ENCODE measurements at regions of chr2 and their contacts with region 1.

Region 1: DNA sequence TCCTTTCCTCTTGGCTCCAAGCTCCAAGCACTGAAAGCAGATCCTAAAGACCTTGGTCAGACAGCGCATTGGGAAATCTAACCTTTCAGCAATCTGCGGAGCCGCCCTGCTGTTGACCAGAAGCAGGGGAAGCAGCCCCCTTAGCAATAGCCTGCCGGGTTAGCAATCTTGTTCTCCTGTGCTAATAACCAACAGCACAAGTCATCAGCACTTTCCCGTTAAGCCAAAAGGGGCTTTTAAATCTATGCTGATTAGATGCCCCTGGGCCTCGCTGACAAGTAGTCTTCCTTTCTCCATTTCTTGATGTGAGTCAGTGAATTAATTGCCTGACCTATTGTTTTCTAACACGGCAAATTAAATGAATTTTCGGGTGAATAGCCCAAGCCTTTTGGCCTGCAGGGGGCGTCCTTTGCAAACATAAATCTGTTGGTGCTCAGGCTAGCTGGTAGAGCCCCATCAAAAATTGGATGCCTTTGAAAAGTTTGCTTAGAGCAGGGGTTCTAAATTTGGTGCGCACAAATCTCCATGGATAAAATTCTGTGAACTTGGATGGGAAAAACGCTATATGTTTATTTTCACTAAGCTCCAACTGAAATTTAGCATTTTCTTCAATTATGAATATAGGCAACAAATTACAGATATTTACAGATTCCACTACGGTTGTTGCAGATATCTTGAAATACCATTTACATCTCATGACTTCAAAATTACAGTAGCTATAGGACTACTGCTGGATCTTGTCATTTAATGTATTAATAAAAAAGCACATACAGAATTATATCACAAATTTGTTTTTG is 24.6 kb downstream of the MAIP1 start:
- DNase-seq: peak; percentile 62
- H3K4me3 Mint-ChIP-seq: no peak overlapping the region
- H3K27ac Mint-ChIP-seq: no peak overlapping the region
- H3K4me1 Mint-ChIP-seq: peaks cover 20% of the 10 kb centered on the region
- H3K27me3 Mint-ChIP-seq: no peaks in the 10 kb centered on the region

Region 2: GRCh38 chr2:199911052-199911876 is 68.8 kb before region 1 on chr2 and contains the start of gene C2orf69:
- intact Hi-C with region 1: loop called (anchors 5 kb)
- DNase-seq: peak; percentile 91
- H3K4me3 Mint-ChIP-seq: peak within 1 kb of the TSS; percentile 92
- H3K27ac Mint-ChIP-seq: peak within 1 kb of the TSS; percentile 96
- H3K4me1 Mint-ChIP-seq: peaks cover 23% of the 10 kb centered on the region
- H3K27me3 Mint-ChIP-seq: peaks cover 6% of the 10 kb centered on the region
- total RNA-seq, gene C2orf69: 16.8 and 17.6 TPM in 2 replicates

Region 3: DNA sequence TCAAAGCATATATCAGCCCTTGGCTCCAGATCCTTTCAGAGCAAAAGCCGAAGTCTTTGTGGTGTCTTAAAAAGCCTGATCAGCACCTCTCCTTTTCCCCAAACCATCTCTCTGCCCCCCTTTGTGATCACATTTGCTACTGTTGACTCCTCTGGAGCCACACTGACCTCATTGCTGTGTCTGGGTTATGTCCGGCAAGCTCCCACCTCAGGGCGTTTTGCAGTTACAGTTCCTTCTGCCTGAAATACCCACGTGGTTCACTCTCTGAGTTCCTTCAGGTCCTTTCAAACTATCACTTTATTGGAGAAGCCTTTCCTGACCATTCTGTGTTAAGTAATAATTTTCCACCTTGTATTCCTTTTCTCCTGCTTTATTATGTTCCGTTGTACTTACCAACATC is 57.2 kb before region 1 on chr2:
- intact Hi-C with region 1: no loop called
- DNase-seq: no peak
- H3K4me3 Mint-ChIP-seq: no peak overlapping the region
- H3K27ac Mint-ChIP-seq: no peak overlapping the region
- H3K4me1 Mint-ChIP-seq: peaks cover 23% of the 10 kb centered on the region
- H3K27me3 Mint-ChIP-seq: no peaks in the 10 kb centered on the region

Region 4: GRCh38 chr2:200039724-200040650 is 60.0 kb after region 1 on chr2:
- intact Hi-C with region 1: no loop called
- DNase-seq: no peak
- H3K4me3 Mint-ChIP-seq: no peak overlapping the region
- H3K27ac Mint-ChIP-seq: no peak overlapping the region
- H3K4me1 Mint-ChIP-seq: no peaks in the 10 kb centered on the region
- H3K27me3 Mint-ChIP-seq: peaks cover 7% of the 10 kb centered on the region

Region 5: DNA sequence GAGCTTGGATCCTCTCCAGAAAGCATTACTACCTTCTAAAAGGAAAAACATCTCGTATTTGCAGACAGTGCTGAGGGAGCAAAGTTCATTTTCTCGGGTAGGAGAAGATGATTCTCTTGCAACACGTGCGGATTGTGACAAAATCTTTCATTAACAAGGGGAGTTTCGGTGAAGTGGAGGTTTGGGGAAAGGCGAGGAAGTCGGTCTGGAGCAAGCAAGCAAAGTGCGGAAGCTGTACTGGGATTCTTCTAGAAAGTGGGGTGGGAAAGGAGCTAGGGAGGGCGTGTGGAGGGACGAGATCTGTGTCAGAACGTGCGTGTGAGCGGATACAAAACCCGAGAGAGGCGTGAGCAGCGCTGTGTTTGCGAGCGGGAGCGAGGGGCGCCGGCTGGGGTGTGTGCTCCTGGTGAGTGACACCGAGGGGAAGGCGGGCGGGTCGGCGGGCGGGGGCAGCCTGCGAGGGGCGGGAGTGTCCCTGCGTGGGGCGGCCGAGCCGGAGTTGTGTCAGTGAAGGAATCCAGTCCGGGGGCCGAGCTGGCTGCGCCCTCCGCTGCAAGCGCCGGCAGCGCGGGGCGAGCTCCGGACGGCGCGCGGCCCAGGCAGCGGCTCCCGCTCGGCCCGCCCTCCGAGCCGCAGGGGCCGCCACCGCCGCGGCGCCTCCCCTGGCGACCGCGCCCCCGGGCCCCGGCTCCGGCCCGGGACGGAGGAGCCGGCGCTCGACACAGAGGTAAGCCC is 326.3 kb after region 1 on chr2 and contains the start of gene SPATS2L:
- intact Hi-C with region 1: loop called (anchors 2 kb)
- DNase-seq: peak; percentile 48
- H3K4me3 Mint-ChIP-seq: peak within 1 kb of the TSS; percentile 92
- H3K27ac Mint-ChIP-seq: peak within 1 kb of the TSS; percentile 91
- H3K4me1 Mint-ChIP-seq: peaks cover 40% of the 10 kb centered on the region
- H3K27me3 Mint-ChIP-seq: peaks cover 12% of the 10 kb centered on the region
- total RNA-seq, gene SPATS2L: 57.5 and 62.2 TPM in 2 replicates

Region 6: DNA sequence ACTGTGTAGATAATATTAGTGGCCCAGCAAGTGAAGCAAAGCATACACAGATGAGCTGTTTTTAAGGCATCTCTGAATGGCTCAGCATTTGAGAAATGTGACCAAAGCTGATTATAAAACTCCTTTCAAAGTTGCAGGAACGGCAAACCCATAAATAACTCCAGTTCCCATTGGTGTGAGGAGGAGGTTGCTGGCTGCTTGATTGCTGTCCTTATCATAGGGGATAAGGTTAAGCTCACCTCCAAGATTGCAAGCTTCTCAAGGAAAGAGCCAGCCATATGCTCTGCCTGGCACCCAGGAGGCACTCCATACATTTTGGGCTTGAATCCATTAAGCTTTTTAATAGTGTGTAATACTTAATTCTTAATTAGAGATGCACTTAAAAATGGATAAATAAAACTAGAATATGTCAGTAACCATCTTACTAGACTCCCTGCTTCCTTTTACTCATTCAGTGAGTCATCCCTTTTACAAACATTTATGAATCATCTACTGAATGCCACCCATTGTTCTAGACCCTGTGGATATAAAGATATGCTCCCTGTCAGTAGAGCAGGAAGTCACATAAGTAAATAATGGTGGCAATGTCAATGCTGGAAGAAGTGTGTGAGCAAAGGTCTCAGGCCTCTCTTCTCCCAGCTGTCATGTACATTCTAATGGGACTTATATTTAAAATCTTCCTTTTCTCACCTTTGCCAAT is 425.7 kb after region 1 on chr2:
- intact Hi-C with region 1: loop called (anchors 2 kb)
- DNase-seq: no peak
- H3K4me3 Mint-ChIP-seq: no peak overlapping the region
- H3K27ac Mint-ChIP-seq: peak overlapping the region; percentile 67
- H3K4me1 Mint-ChIP-seq: peaks cover 50% of the 10 kb centered on the region
- H3K27me3 Mint-ChIP-seq: no peaks in the 10 kb centered on the region

Region 7: GRCh38 chr2:200471324-200471848 is 491.4 kb after region 1 on chr2:
- intact Hi-C with region 1: loop called (anchors 2 kb)
- DNase-seq: no peak
- H3K4me3 Mint-ChIP-seq: no peak overlapping the region
- H3K27ac Mint-ChIP-seq: peak overlapping the region; percentile 75
- H3K4me1 Mint-ChIP-seq: peaks cover 32% of the 10 kb centered on the region
- H3K27me3 Mint-ChIP-seq: no peaks in the 10 kb centered on the region

Region 8: GRCh38 chr2:200635251-200635650 is 655.2 kb after region 1 on chr2:
- intact Hi-C with region 1: no loop called
- DNase-seq: no peak
- H3K4me3 Mint-ChIP-seq: no peak overlapping the region
- H3K27ac Mint-ChIP-seq: no peak overlapping the region
- H3K4me1 Mint-ChIP-seq: no peaks in the 10 kb centered on the region
- H3K27me3 Mint-ChIP-seq: peaks cover 19% of the 10 kb centered on the region

Region 9: GRCh38 chr2:200703127-200703925 is 723.3 kb after region 1 on chr2:
- intact Hi-C with region 1: loop called (anchors 1 kb)
- DNase-seq: no peak
- H3K4me3 Mint-ChIP-seq: peak overlapping the region; percentile 6
- H3K27ac Mint-ChIP-seq: peak overlapping the region; percentile 87
- H3K4me1 Mint-ChIP-seq: peaks cover 47% of the 10 kb centered on the region
- H3K27me3 Mint-ChIP-seq: no peaks in the 10 kb centered on the region